ENCODE measurements at regions of chr1 and their contacts with region 1.

Region 1: DNA sequence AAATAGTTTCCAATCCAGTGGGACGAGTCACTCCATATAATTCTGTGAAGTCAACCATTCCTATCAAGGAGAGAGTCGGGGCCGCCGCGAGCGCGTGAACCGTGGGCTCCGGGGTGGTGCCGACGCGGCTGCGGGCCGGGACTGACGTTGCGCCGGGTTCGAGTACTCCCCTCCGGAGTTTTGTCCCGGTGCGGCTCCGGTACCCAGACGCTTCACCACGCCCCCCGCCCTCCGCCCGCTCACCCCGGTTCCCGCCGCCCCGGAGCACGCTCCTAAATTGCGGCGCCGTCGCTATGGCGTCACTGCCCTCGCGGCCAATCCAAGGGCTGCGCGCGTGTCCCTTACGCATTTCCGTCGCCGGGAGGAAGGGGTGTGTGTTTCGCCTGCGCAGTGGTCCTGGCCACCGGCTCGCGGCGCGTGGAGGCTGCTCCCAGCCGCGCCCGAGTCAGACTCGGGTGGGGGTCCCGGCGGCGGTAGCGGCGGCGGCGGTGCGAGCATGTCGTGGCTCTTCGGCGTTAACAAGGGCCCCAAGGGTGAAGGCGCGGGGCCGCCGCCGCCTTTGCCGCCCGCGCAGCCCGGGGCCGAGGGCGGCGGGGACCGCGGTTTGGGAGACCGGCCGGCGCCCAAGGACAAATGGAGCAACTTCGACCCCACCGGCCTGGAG is at the start of gene ATAD3B:
- DNase-seq: peak; percentile 96
- total RNA-seq, gene ATAD3B: 13.7 TPM

Region 2: DNA sequence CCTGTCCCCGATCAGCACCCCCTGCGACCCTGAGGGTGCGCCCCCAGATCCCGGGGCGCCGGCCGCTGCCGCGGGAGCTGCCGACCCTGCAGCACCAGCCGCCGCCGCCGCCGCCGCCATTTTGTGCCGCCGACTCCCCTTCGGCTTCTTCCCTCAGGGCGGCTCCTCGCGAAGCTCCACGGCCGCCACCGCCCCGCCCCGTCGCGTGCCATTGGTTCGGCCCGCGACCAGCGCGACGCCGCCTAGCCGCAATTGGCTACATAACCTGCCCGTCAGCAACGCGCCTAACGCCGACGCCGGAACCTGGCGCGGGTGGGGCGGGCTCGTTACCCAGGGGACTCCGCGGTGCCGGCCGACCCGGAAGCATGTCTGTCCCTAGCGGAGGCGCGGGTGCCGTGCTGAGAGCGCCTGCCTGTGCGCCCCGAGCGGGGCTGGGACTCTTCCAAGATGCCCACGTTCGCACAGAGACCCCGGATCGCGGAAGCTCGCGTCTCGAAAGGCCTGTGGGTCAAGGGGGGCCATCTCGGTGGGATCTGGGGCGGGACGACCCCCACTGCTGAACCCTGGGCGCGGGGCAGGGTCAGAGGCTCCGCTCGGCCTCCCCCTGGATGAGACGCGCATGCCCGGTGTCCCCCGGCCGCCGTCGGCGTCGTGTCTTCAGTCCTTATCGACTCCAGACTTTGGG is 72.2 kb before region 1 on chr1 and contains the start of gene CCNL2:
- intact Hi-C with region 1: loop called (anchors 2 kb)
- DNase-seq: peak; percentile 99
- total RNA-seq, gene CCNL2: 78.6 TPM

Region 3: GRCh38 chr1:1451696-1452367 is 19.7 kb before region 1 on chr1:
- intact Hi-C with region 1: no loop called
- DNase-seq: no peak

Region 4: GRCh38 chr1:1511533-1512285 is 40.2 kb after region 1 on chr1 and contains the start of gene ATAD3A:
- intact Hi-C with region 1: loop called (anchors 2 kb)
- DNase-seq: peak; percentile 99
- total RNA-seq, gene ATAD3A: 13.7 TPM